Activated CD4-positive, alpha-beta T cell treated with anti-CD3 and anti-CD28 coated beads for 36 hours (primary cell): ENCODE measurements at regions of chr1 and their contacts with region 1.

Region 1: GRCh38 chr1:182084487-182085316 is 23.2 kb upstream of the ZNF648 start:
- DNase-seq: peak; percentile 89
- ATAC-seq: peak; percentile 90
- H3K4me3 Mint-ChIP-seq: no peak overlapping the region
- H3K27ac Mint-ChIP-seq: no peak overlapping the region
- H3K4me1 Mint-ChIP-seq: peaks cover 38% of the 10 kb centered on the region
- H3K27me3 Mint-ChIP-seq: no peaks in the 10 kb centered on the region

Region 2: GRCh38 chr1:181479137-181479745 is 605.5 kb before region 1 on chr1:
- CTCF ChIA-PET with region 1: interaction called, 17 read pairs
- POLR2A ChIA-PET with region 1: no interaction called
- intact Hi-C with region 1: loop called (anchors 1 to 10 kb)
- DNase-seq: peak; percentile 42
- ATAC-seq: peak; percentile 52
- H3K4me3 Mint-ChIP-seq: no peak overlapping the region
- H3K27ac Mint-ChIP-seq: no peak overlapping the region
- H3K4me1 Mint-ChIP-seq: peaks cover 3% of the 10 kb centered on the region
- H3K27me3 Mint-ChIP-seq: peaks cover 31% of the 10 kb centered on the region

Region 3: GRCh38 chr1:182015360-182015759 is 69.3 kb before region 1 on chr1:
- CTCF ChIA-PET with region 1: no interaction called
- POLR2A ChIA-PET with region 1: no interaction called
- intact Hi-C with region 1: no loop called
- DNase-seq: no peak
- ATAC-seq: no peak
- H3K4me3 Mint-ChIP-seq: no peak overlapping the region
- H3K27ac Mint-ChIP-seq: no peak overlapping the region
- H3K4me1 Mint-ChIP-seq: no peaks in the 10 kb centered on the region
- H3K27me3 Mint-ChIP-seq: peaks cover 17% of the 10 kb centered on the region

Region 4: GRCh38 chr1:182122256-182122912 is 37.7 kb after region 1 on chr1:
- CTCF ChIA-PET with region 1: no interaction called
- POLR2A ChIA-PET with region 1: no interaction called
- intact Hi-C with region 1: no loop called
- DNase-seq: no peak
- ATAC-seq: no peak
- H3K4me3 Mint-ChIP-seq: no peak overlapping the region
- H3K27ac Mint-ChIP-seq: no peak overlapping the region
- H3K4me1 Mint-ChIP-seq: no peaks in the 10 kb centered on the region
- H3K27me3 Mint-ChIP-seq: peaks cover 2% of the 10 kb centered on the region

Region 5: GRCh38 chr1:182143154-182143657 is 58.5 kb after region 1 on chr1:
- CTCF ChIA-PET with region 1: interaction called, 21 read pairs
- POLR2A ChIA-PET with region 1: no interaction called
- intact Hi-C with region 1: loop called (anchors 1 to 2 kb)
- DNase-seq: peak; percentile 94
- ATAC-seq: peak; percentile 78
- H3K4me3 Mint-ChIP-seq: no peak overlapping the region
- H3K27ac Mint-ChIP-seq: no peak overlapping the region
- H3K4me1 Mint-ChIP-seq: no peaks in the 10 kb centered on the region
- H3K27me3 Mint-ChIP-seq: peaks cover 4% of the 10 kb centered on the region

Region 6: DNA sequence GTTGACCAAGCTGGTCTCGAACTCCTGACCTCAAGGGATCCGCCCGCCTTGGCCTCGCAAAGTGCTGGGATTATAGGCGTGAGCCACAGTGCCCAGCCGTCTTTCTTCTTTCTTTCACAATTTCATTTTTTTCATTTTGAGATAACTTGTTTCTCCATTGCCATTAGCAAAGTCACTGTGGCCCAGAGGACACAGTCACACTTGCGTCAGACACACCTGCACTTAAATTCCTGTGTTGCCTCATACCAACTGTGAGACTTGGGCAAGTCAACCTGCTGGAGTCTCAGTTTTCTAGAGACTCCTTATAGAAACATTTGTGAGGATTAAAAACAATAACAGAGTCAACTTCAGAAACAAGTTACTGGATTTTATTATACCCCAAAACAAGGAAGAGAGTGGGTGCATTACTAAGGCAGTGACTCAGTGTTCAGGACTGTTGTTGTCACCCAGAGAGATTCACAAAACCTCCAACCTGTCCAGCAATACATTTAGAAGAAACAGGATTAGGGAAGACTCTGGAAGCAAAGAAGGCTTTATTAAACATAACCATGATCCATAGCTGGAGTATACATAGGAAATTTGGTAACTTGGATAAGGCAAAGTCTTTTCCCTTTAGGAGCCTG is 313.2 kb after region 1 on chr1:
- CTCF ChIA-PET with region 1: interaction called, 75 read pairs
- POLR2A ChIA-PET with region 1: no interaction called
- intact Hi-C with region 1: loop called (anchors 1 kb)
- DNase-seq: no peak
- ATAC-seq: no peak
- H3K4me3 Mint-ChIP-seq: no peak overlapping the region
- H3K27ac Mint-ChIP-seq: no peak overlapping the region
- H3K4me1 Mint-ChIP-seq: peaks cover 2% of the 10 kb centered on the region
- H3K27me3 Mint-ChIP-seq: peaks cover 6% of the 10 kb centered on the region

Region 7: GRCh38 chr1:182781841-182782586 is 697.3 kb after region 1 on chr1:
- CTCF ChIA-PET with region 1: no interaction called
- POLR2A ChIA-PET with region 1: no interaction called
- intact Hi-C with region 1: loop called (anchors 2 to 5 kb)
- DNase-seq: peak; percentile 86
- ATAC-seq: peak; percentile 77
- H3K4me3 Mint-ChIP-seq: no peak overlapping the region
- H3K27ac Mint-ChIP-seq: no peak overlapping the region
- H3K4me1 Mint-ChIP-seq: peaks cover 3% of the 10 kb centered on the region
- H3K27me3 Mint-ChIP-seq: no peaks in the 10 kb centered on the region